AG04450 (cell line): ENCODE measurements at regions of chr2 and their contacts with region 1.

Region 1: GRCh38 chr2:102240640-102241370 is 54.0 kb downstream of the IL1RL2 start:
- DNase-seq: peak; percentile 86
- H3K4me3 ChIP-seq: no peak overlapping the region
- H3K27ac ChIP-seq: peak overlapping the region; percentile 49
- H3K27me3 ChIP-seq: no peaks in the 10 kb centered on the region
- CTCF ChIP-seq: peak; percentile 99

Region 2: GRCh38 chr2:101883863-101884262 is 356.9 kb before region 1 on chr2:
- CTCF ChIA-PET with region 1: interaction called, 75 read pairs
- POLR2A ChIA-PET with region 1: no interaction called
- DNase-seq: peak; percentile 10
- H3K4me3 ChIP-seq: no peak overlapping the region
- H3K27ac ChIP-seq: no peak overlapping the region
- H3K27me3 ChIP-seq: no peaks in the 10 kb centered on the region
- CTCF ChIP-seq: peak; percentile 70

Region 3: DNA sequence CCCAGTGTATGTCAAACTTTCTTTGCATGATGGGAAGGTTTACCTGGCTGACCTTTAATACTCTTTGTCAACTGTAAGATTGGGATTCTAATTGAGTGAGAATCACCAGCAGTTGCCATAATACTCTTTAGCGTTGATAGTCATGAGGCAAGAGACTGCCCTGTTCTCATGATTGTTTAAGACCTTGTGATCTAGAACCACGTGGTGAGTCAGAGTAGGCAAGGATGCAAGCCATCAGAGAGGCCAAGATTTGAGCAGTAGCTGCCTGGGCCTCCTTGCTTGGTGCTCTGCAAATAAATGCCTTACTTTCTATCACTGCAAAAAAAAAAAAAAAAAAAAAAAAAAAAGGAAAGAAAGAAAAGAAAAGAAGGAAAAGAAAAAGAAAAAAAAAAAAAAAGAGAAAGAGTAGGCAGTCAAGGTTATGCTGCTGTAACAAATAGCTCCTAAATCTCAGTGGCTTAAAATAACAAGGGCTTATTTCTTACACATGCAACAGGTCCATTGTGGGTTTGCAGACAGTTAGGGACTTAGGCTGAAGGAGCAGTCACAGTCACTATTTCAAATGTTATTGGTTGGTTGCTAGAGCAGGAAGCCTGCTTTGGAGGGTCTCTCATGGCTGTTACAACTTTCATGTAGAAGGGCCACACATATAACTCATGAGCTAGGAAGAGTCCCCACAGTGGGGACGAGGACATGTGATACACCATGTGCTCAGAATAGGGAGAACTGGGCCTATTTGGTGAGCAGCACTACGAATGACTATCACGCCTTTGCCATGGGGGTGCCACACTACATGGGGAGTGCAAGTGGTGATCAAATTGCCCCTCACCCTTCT is 227.4 kb before region 1 on chr2:
- CTCF ChIA-PET with region 1: interaction called, 99 read pairs
- POLR2A ChIA-PET with region 1: no interaction called
- DNase-seq: no peak
- H3K4me3 ChIP-seq: no peak overlapping the region
- H3K27ac ChIP-seq: no peak overlapping the region
- H3K27me3 ChIP-seq: no peaks in the 10 kb centered on the region
- CTCF ChIP-seq: no peak

Region 4: DNA sequence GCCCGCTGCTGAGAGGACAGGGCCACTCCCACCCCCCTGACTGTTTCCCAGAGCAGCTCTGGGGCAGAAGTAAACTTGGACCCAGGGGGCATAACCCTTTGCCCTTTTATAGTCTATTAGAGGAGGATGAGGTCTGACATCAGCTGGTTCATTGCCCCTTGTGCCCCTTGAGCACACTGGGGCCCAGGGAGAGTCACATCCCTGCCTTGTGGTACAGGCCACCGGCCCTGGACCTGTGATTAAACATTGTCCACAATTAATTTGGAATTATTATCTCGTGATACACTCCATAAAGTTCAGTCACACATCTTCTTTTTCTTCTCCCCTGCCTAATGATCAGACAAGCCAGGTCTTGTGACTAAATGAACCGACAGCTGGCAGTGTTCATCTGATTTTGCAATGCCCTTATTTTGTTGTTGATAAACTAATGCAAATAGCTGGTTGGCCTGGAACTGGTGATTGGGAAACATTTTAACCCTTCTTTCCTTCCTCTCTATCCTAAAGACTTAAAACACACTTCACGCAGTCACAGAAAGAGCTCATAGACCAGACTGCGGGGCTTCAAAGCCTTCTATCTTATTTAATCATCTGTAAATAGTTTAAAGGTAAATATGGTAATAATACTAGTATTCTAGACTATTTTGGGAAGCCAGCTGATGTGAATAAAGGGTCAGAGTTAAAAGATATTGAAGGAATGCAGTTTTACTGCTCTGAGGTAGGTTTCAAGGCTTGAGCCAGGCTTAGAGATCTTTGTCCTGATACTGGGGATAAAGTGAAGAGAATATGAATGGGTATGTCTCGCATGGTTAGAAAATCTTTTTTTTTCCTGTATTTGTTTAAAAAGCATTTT is 84.9 kb before region 1 on chr2:
- CTCF ChIA-PET with region 1: interaction called, 11 read pairs
- POLR2A ChIA-PET with region 1: no interaction called
- DNase-seq: no peak
- H3K4me3 ChIP-seq: no peak overlapping the region
- H3K27ac ChIP-seq: peak overlapping the region; percentile 80
- H3K27me3 ChIP-seq: no peaks in the 10 kb centered on the region
- CTCF ChIP-seq: no peak

Region 5: GRCh38 chr2:102226612-102227391 is 14.0 kb before region 1 on chr2:
- CTCF ChIA-PET with region 1: interaction called, 11 read pairs
- POLR2A ChIA-PET with region 1: no interaction called
- DNase-seq: no peak
- H3K4me3 ChIP-seq: no peak overlapping the region
- H3K27ac ChIP-seq: peak overlapping the region; percentile 96
- H3K27me3 ChIP-seq: no peaks in the 10 kb centered on the region
- CTCF ChIP-seq: no peak

Region 6: GRCh38 chr2:102342891-102343290 is 102.1 kb after region 1 on chr2:
- CTCF ChIA-PET with region 1: interaction called, 14 read pairs
- POLR2A ChIA-PET with region 1: no interaction called
- DNase-seq: no peak
- H3K4me3 ChIP-seq: no peak overlapping the region
- H3K27ac ChIP-seq: no peak overlapping the region
- H3K27me3 ChIP-seq: no peaks in the 10 kb centered on the region
- CTCF ChIP-seq: peak; percentile 45